Esophagus squamous epithelium (tissue), 5 donors: ENCODE measurements at regions of chr6 and their contacts with region 1.

Region 1: DNA sequence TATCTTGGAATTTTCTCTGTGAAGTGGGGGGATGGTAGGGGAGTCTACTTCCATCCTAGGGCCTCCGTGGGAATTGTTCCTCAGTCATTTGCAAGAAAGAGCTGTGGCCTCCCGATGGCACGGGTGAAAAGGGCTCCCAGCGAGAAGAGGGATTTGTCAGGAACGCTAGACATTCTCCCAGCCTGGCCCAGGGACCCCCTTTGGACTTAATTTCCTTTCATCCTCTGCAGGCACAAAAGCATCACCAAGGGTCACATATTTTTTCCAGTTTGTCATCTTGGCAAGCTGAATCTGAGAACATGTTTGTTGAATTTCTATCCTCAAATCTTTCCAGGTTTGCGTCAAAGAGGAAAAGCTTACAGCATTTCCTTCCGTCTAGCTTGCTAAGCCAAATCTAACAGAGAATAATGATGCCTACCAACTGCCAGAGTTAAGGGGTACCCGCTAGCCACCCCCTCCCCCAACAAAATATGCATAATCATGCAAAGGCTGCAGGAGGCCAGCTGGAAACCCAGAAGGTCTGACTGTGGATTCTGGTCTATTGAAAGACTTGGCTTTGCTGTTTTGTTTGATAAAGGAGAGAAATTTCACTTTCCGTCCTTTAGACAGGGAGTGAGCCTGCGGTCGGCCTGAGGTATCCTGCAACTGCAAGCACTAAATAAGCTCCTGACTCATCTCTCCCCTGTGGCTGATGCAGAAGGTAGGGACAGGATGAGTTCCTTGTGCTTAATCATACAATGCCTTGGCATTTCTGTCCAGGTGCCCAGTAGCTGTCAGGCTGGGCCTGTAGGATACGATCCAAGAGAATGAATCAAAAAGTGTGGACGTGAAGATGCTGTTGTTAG is 23.1 kb downstream of the PSMG4 start:
- DNase-seq: no peak
- H3K4me3 ChIP-seq: no peak overlapping the region
- H3K27ac ChIP-seq: peak overlapping the region; percentile 42 to 79 (median 69)
- H3K4me1 ChIP-seq: peaks cover 7 to 37% (median 16%) of the 10 kb centered on the region in 3 donors
- H3K27me3 ChIP-seq: no peaks in the 10 kb centered on the region
- CTCF ChIP-seq: no peak
- POLR2A ChIP-seq: no peak

Region 2: GRCh38 chr6:3442431-3443220 is 160.8 kb after region 1 on chr6:
- intact Hi-C with region 1: loop called (anchors 10 kb)
- DNase-seq: no peak
- H3K4me3 ChIP-seq: no peak overlapping the region
- H3K27ac ChIP-seq: no peak overlapping the region
- H3K4me1 ChIP-seq: peaks cover 11 to 50% (median 15%) of the 10 kb centered on the region in 3 donors
- H3K27me3 ChIP-seq: no peaks in the 10 kb centered on the region
- CTCF ChIP-seq: no peak
- POLR2A ChIP-seq: no peak

Region 3: DNA sequence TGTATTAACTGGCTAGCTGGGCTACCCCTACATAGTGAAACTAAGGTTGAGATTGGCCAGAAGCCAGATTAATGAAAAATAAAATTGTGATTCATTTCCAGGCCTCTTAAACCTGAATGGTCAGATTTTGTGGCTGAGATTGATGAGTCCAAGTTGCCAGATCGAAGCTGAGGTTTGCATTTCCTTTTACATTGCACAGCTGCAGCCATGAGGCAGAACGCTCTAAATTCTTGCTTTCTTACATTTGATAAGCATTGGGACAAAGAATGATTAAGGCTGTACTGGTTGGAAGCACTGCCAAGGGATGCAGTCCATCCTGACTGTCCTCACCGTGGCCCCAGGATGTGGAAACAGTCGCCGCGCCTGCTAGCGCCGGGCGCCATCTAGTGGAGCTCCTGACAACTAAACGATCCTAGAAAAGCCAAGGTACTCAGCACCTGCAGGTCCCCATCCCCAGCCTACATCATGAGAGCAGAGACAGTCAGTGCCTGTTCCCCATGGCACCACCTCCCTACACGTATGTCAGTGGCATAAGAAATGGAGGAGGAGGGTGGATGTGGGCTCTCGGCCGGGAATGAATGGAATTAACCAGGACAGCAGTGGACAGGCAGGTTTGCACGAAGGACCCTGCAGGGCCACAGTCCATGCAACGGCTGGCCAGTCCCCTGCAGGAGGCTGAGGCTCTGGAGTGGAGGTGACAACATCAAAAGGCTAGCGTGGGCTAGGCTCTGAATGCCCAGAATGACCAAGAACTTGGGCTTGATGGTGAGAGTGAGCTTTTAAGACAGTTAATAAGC is 450.7 kb after region 1 on chr6:
- intact Hi-C with region 1: loop called (anchors 5 kb)
- DNase-seq: no peak
- H3K4me3 ChIP-seq: no peak overlapping the region
- H3K27ac ChIP-seq: no peak overlapping the region
- H3K4me1 ChIP-seq: peaks cover 0 to 31% (median 6%) of the 10 kb centered on the region in 3 donors
- H3K27me3 ChIP-seq: no peaks in the 10 kb centered on the region
- CTCF ChIP-seq: peak; percentile 70 to 93 (median 82)
- POLR2A ChIP-seq: no peak